ENCODE measurements at regions of chr9 and their contacts with region 1.

Region 1: GRCh38 chr9:124256517-124257138 is 1.1 kb upstream of the NEK6 start:
- DNase-seq: no peak
- H3K4me3 Mint-ChIP-seq: peak overlapping the region; percentile 80
- H3K27ac Mint-ChIP-seq: no peak overlapping the region
- H3K4me1 Mint-ChIP-seq: peaks cover 71% of the 10 kb centered on the region
- H3K27me3 Mint-ChIP-seq: peaks cover 15% of the 10 kb centered on the region

Region 2: DNA sequence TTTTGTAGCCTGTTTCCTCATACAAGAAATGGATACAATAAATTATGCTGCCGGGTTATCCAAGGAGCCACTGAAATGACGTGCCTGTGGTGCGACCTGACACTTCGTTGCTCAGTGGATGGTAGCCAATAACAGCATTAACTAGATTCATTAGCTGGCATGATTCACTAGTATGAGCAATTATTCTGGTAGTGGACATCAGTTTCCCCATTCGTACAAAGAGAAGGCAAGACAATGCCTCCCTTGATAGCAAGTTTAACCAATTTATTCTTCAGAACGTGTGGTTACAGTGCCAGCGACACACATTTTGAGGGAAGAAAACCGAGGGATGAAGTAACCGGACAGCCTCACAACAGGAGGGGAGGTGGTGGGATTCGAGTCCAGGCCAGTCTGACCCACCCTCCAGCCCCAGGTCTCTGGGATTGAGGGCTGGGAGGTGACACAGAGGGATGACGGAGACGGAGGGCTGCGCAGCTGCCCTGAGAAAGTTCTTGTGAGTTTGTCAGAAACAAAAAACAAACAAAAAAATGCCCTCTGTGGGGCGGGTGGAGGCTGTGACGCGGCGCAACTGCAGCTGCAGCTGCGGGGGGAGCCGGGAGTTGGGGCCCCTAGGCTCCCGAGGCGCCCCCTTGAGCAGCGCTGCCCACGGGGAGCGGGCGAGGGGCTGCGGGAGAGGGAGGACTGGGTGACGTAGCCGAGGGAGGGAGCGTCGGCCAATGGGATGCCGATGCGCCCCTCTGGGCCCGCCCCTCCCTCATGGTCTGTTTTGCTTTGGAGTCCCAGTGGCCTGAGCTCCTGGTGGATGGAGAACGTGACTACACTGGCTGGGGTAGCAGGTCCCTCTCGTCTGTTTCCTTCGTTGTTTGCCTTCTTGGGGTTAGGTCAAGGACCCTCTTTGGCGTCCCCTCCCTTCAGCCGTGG is 234.2 kb before region 1 on chr9:
- CTCF ChIA-PET with region 1: no interaction called
- POLR2A ChIA-PET with region 1: no interaction called
- intact Hi-C with region 1: no loop called
- DNase-seq: no peak
- H3K4me3 Mint-ChIP-seq: no peak overlapping the region
- H3K27ac Mint-ChIP-seq: no peak overlapping the region
- H3K4me1 Mint-ChIP-seq: peaks cover 10% of the 10 kb centered on the region
- H3K27me3 Mint-ChIP-seq: peaks cover 62% of the 10 kb centered on the region

Region 3: GRCh38 chr9:124202447-124202971 is 54.1 kb before region 1 on chr9:
- CTCF ChIA-PET with region 1: interaction called, 3 read pairs
- POLR2A ChIA-PET with region 1: no interaction called
- intact Hi-C with region 1: loop called (anchors 1 kb)
- DNase-seq: peak; percentile 96
- H3K4me3 Mint-ChIP-seq: peak overlapping the region; percentile 31
- H3K27ac Mint-ChIP-seq: peak overlapping the region; percentile 87
- H3K4me1 Mint-ChIP-seq: peaks cover 47% of the 10 kb centered on the region
- H3K27me3 Mint-ChIP-seq: peaks cover 4% of the 10 kb centered on the region

Region 4: GRCh38 chr9:124210697-124211096 is 45.9 kb before region 1 on chr9:
- CTCF ChIA-PET with region 1: interaction called, 4 read pairs
- POLR2A ChIA-PET with region 1: no interaction called
- intact Hi-C with region 1: loop called (anchors 1 kb)
- DNase-seq: peak; percentile 77
- H3K4me3 Mint-ChIP-seq: no peak overlapping the region
- H3K27ac Mint-ChIP-seq: no peak overlapping the region
- H3K4me1 Mint-ChIP-seq: peaks cover 71% of the 10 kb centered on the region
- H3K27me3 Mint-ChIP-seq: peaks cover 2% of the 10 kb centered on the region

Region 5: DNA sequence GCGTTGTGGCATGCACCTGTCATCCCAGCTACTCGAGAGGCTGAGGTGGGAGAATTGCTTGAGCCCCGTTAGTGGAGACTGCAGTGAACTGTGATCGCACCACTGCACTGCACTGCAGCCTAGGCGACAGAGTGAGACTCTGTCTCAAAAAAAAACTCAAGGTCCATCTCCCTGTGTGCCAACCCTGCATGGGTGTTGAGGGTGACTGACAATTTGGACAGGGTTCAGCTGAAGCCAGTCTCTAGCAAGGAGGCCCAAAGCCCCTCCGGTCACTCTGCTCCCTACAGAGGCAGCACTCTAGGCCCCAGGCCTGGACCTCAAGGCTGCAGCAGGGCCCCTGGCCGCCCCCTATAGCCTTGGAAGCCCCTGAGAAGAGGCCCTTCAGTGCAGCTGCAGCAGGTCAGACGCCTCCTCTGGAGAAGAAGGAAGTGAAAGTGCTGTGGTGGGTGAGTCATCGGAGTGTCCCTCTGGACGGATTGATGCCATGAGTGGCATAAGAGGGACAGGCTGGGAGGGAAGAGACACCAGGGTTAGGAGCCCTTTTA is 38.1 kb before region 1 on chr9:
- CTCF ChIA-PET with region 1: interaction called, 3 read pairs
- POLR2A ChIA-PET with region 1: interaction called, 3 read pairs
- intact Hi-C with region 1: loop called (anchors 1 kb)
- DNase-seq: peak; percentile 76
- H3K4me3 Mint-ChIP-seq: no peak overlapping the region
- H3K27ac Mint-ChIP-seq: peak overlapping the region; percentile 25
- H3K4me1 Mint-ChIP-seq: peaks cover 56% of the 10 kb centered on the region
- H3K27me3 Mint-ChIP-seq: no peaks in the 10 kb centered on the region

Region 6: DNA sequence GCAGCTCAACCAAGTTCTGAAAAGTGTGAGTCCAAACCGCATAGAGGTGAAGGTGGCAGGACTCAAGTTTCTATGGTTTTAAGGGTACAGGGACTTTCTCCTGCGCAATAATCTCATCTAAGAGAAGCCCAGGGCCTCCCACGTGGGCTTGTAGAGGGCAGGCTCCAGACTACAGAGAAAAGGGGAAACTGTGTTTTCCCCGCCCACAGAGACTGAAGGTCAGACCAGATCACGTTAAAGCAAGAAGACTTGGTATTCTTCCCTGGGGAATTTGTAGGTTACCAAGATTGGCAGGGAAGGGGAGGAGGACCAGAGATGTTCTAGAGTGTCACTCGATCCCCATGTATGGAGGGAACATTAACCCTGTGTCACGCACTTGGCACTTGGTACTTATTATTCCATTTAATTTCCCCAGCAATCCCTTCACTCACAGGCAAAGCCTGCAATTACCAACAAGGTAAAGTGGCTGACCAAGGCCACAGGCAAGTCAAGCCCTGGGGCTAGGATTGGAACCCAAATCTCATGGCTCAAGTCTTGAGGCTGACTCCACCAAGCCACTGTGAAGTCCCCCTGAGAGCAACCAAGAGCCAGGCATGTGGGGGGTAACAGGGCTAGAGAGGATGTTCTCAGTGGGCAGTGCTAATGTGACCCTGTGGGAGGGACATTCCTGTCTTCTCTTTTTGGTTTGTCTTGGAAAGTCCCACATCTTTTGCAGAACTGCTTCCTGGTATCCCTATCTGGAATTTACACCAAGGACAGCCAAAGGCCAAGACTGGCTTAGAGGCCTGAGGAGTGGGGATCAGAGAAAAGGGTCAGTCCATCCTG is 17.2 kb before region 1 on chr9:
- CTCF ChIA-PET with region 1: no interaction called
- POLR2A ChIA-PET with region 1: no interaction called
- intact Hi-C with region 1: loop called (anchors 1 kb)
- DNase-seq: no peak
- H3K4me3 Mint-ChIP-seq: no peak overlapping the region
- H3K27ac Mint-ChIP-seq: no peak overlapping the region
- H3K4me1 Mint-ChIP-seq: peaks cover 29% of the 10 kb centered on the region
- H3K27me3 Mint-ChIP-seq: peaks cover 4% of the 10 kb centered on the region

Region 7: GRCh38 chr9:124285903-124286291 is 29.3 kb after region 1 on chr9:
- CTCF ChIA-PET with region 1: interaction called, 4 read pairs
- POLR2A ChIA-PET with region 1: interaction called, 4 read pairs
- intact Hi-C with region 1: loop called (anchors 1 kb)
- DNase-seq: peak; percentile 79
- H3K4me3 Mint-ChIP-seq: peak overlapping the region; percentile 70
- H3K27ac Mint-ChIP-seq: peak overlapping the region; percentile 99
- H3K4me1 Mint-ChIP-seq: peaks cover 34% of the 10 kb centered on the region
- H3K27me3 Mint-ChIP-seq: no peaks in the 10 kb centered on the region

Measured in activated CD4-positive, alpha-beta memory T cell treated with anti-CD3 and anti-CD28 coated beads for 36 hours (primary cell).